Heart left ventricle (tissue), 16 donors: ENCODE measurements at regions of chr20 and their contacts with region 1.

Region 1: GRCh38 chr20:4195499-4195898 is 180.1 kb upstream of the RNF24 start:
- DNase-seq: no peak
- ATAC-seq: peak in 3 of 4 donors; percentile 39 to 54 (median 50)
- H3K4me3 ChIP-seq: no peak overlapping the region
- H3K27ac ChIP-seq: no peak overlapping the region
- H3K4me1 ChIP-seq: peaks cover 0 to 5% (median 0%) of the 10 kb centered on the region in 12 donors
- H3K27me3 ChIP-seq: no peaks in the 10 kb centered on the region
- CTCF ChIP-seq: peak in 10 of 12 donors; percentile 22 to 57 (median 35)
- POLR2A ChIP-seq: no peak

Region 2: DNA sequence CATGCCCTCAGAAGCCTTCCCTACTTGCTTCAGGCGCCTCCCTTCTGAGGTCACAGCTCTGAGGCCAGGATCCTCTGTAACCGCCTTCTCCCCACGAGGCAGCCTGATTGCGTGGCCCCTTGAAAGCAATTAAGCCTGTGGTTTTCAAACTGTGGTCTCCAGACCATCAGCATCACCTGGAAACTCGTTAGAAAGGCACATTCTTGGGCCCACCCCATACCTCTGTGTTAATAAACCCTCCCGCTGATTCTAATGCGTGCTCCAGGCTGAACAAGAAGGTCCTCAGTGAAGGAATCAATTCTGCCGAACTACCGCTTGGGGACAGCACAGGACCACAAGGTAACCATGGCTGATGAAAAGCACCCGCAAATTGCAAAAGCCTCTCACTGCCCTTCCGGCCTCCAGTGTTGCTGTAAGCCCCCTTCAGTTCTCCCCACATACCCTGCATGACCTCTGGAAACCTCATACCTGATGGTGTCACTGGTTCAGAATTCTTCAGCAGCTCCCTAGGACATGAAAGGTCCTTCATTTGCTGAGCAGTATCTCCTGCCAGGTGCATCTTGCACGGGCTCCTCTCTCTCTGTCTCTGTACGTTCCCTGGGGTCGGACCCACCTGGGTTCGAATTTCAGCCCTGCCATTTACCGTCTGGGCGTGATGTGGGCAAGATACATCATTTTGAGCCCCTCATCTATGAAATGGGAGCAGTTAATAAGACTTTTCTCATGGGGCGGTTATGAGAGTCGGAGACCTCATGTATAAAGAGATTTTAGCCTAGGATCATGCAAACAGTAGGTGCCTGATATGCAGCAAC is 86.8 kb before region 1 on chr20:
- intact Hi-C with region 1: loop called in 2 of 10 experiments (anchors 1 kb)
- DNase-seq: peak in 4 of 5 donors; percentile 52 to 66 (median 60)
- ATAC-seq: peak; percentile 84 to 91 (median 88)
- H3K4me3 ChIP-seq: no peak overlapping the region
- H3K27ac ChIP-seq: no peak overlapping the region
- H3K4me1 ChIP-seq: peaks cover 0 to 24% (median 7%) of the 10 kb centered on the region in 12 donors
- H3K27me3 ChIP-seq: no peaks in the 10 kb centered on the region
- CTCF ChIP-seq: peak; percentile 90 to 99 (median 97)
- POLR2A ChIP-seq: no peak

Region 3: GRCh38 chr20:4119854-4120209 is 75.7 kb before region 1 on chr20:
- intact Hi-C with region 1: no loop called
- DNase-seq: no peak
- ATAC-seq: peak in 3 of 4 donors; percentile 55 to 70 (median 64)
- H3K4me3 ChIP-seq: no peak overlapping the region
- H3K27ac ChIP-seq: peak overlapping the region in 5 of 12 donors; percentile 29 to 68 (median 52)
- H3K4me1 ChIP-seq: peaks cover 0 to 38% (median 8%) of the 10 kb centered on the region in 12 donors
- H3K27me3 ChIP-seq: no peaks in the 10 kb centered on the region
- CTCF ChIP-seq: no peak
- POLR2A ChIP-seq: no peak

Region 4: GRCh38 chr20:4247898-4248858 is 52.7 kb after region 1 on chr20:
- intact Hi-C with region 1: no loop called
- DNase-seq: peak in 1 of 5 donors; percentile 49
- ATAC-seq: no peak
- H3K4me3 ChIP-seq: peak overlapping the region in 1 of 12 donors; percentile 58
- H3K27ac ChIP-seq: peak overlapping the region in 1 of 12 donors; percentile 4
- H3K4me1 ChIP-seq: peaks cover 0 to 15% (median 3%) of the 10 kb centered on the region in 12 donors
- H3K27me3 ChIP-seq: peaks cover 4 to 61% (median 27%) of the 10 kb centered on the region in 9 donors
- CTCF ChIP-seq: no peak
- POLR2A ChIP-seq: no peak